ENCODE measurements at regions of chr3 and their contacts with region 1.

Region 1: GRCh38 chr3:159884661-159885402 is 103.8 kb upstream of the IL12A start:
- DNase-seq: peak; percentile 64 to 78 (median 71)
- H3K4me3 ChIP-seq: no peak overlapping the region
- H3K27ac ChIP-seq: no peak overlapping the region
- H3K4me1 ChIP-seq: peaks cover 3 to 38% (median 22%) of the 10 kb centered on the region in 4 experiments
- H3K27me3 ChIP-seq: no peaks in the 10 kb centered on the region

Region 2: DNA sequence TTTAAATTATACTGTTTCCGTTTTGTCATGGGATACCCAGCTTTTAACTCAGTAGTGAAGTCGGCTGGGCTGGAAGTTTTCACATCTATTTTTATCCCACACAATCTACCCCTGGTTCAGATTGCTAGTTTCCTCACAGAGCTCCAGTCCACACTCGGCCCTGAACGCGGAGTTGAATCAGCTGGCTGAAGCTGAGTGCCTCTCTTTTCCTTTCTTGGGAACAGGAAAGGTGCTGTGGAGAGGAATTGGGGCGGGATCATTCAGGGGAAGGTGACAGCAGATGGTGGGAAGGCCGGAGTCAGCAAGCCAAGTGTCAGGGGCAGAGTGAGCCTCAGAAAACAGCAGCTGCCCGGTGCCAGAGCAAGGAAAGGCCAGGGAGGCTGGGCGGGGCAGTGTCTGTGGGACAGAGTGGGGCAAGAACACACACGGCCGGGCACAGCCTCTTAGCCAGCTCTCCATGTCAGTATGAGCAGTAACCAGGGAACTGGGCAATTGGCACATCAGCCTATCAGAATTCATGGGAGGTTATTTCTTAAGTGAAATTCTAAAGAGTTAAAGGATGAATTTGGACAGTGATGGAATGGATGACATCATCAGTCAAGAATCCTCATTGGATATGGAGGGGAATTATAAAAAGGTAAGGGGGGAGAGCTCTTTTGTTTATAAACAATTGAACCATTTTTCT is 31.9 kb before region 1 on chr3:
- CTCF ChIA-PET with region 1: interaction called, 56 read pairs
- POLR2A ChIA-PET with region 1: no interaction called
- DNase-seq: no peak
- H3K4me3 ChIP-seq: peak overlapping the region in 6 of 7 experiments; percentile 32 to 79 (median 62)
- H3K27ac ChIP-seq: peak overlapping the region; percentile 69 to 88
- H3K4me1 ChIP-seq: peaks cover 25 to 88% (median 67%) of the 10 kb centered on the region in 4 experiments
- H3K27me3 ChIP-seq: no peaks in the 10 kb centered on the region

Region 3: DNA sequence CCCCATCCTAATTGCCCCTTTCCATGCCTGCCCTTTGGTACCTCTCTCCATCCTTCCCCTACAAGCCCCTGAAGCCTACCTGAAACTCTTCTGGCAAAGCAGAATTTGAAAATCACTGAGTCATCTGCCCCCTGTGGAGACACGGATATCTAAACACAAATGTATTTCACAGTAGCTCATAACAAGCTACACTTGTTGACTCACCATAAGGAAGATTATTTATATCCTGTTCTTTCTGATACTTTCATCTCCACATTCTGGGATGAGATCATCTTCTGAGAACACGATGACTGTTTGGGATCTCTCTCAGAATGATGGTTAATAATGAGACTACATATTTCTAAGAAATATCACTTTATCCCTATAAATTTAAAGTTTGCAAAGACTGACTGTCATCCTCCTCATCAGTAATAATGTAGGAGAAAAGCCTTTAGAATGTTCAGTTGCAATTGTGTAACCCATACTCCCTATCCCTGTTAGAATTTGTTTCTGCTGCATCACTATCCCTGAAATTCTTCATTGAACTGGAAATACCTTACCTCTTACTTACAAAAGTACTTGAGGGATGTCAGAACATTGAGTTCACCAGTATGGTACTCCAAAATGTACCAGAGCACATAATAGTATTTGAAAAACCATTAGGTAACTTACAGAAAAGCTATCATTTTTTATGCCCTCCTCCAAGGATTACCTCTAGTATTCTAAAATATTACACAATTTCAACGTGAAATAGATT is 12.3 kb before region 1 on chr3:
- CTCF ChIA-PET with region 1: interaction called, 75 read pairs
- POLR2A ChIA-PET with region 1: no interaction called
- DNase-seq: peak; percentile 48 to 81 (median 75)
- H3K4me3 ChIP-seq: no peak overlapping the region
- H3K27ac ChIP-seq: no peak overlapping the region
- H3K4me1 ChIP-seq: peaks cover 0 to 30% (median 6%) of the 10 kb centered on the region in 4 experiments
- H3K27me3 ChIP-seq: no peaks in the 10 kb centered on the region

Region 4: DNA sequence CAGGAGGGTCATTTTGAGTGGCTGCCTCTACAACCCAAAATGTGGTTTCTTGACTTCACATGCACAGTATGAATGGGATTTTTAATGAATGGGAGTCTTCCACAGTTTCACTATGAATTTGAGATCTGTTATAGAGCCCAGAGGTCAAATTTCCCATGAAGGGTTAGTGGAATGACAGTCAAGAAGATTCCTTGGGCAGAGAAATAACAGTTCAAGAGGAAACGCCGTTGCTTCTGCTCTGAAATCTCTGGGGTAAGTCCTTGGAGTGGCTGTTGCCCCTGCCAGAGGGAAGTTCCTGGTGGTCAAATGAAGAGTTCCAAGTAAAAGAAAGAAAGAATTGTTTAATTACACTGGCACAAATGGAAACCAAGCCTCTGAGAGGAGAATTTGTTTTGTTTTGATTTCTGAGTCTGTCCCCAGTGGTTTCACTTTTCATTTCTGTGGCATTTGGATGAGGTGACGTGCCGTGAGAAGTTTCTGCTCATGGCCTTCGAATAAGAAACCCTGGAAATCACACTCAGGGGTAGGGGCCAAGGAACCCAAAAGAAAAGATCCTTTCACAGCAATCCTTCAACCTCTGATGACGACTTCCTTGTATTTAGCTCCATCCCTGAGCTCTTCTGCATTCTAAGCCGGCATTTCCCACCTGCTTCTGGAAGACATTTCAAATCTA is 26.3 kb after region 1 on chr3:
- CTCF ChIA-PET with region 1: interaction called, 131 read pairs
- POLR2A ChIA-PET with region 1: interaction called, 7 read pairs
- DNase-seq: peak; percentile 45 to 78 (median 75)
- H3K4me3 ChIP-seq: peak overlapping the region in 4 of 7 experiments; percentile 42 to 74 (median 55)
- H3K27ac ChIP-seq: peak overlapping the region in 1 of 2 experiments; percentile 9
- H3K4me1 ChIP-seq: peaks cover 0 to 24% (median 21%) of the 10 kb centered on the region in 4 experiments
- H3K27me3 ChIP-seq: no peaks in the 10 kb centered on the region

Region 5: GRCh38 chr3:159988617-159989271 is 103.9 kb after region 1 on chr3 and contains the start of gene IL12A:
- CTCF ChIA-PET with region 1: interaction called, 80 read pairs
- POLR2A ChIA-PET with region 1: no interaction called
- DNase-seq: peak; percentile 90 to 93 (median 93)
- H3K4me3 ChIP-seq: peak within 1 kb of the TSS; percentile 68 to 93 (median 75)
- H3K27ac ChIP-seq: peak within 1 kb of the TSS; percentile 19 to 35
- H3K4me1 ChIP-seq: peaks cover 1 to 34% (median 20%) of the 10 kb centered on the region in 4 experiments
- H3K27me3 ChIP-seq: no peaks in the 10 kb centered on the region

Region 6: GRCh38 chr3:160003520-160004128 is 118.8 kb after region 1 on chr3:
- CTCF ChIA-PET with region 1: interaction called, 263 read pairs
- POLR2A ChIA-PET with region 1: no interaction called
- DNase-seq: peak; percentile 75 to 78 (median 77)
- H3K4me3 ChIP-seq: no peak overlapping the region
- H3K27ac ChIP-seq: no peak overlapping the region
- H3K4me1 ChIP-seq: peaks cover 0 to 18% (median 14%) of the 10 kb centered on the region in 4 experiments
- H3K27me3 ChIP-seq: no peaks in the 10 kb centered on the region

Measured in common myeloid progenitor, CD34-positive (primary cell).